ENCODE measurements at regions of chr3 and their contacts with region 1.

Region 1: DNA sequence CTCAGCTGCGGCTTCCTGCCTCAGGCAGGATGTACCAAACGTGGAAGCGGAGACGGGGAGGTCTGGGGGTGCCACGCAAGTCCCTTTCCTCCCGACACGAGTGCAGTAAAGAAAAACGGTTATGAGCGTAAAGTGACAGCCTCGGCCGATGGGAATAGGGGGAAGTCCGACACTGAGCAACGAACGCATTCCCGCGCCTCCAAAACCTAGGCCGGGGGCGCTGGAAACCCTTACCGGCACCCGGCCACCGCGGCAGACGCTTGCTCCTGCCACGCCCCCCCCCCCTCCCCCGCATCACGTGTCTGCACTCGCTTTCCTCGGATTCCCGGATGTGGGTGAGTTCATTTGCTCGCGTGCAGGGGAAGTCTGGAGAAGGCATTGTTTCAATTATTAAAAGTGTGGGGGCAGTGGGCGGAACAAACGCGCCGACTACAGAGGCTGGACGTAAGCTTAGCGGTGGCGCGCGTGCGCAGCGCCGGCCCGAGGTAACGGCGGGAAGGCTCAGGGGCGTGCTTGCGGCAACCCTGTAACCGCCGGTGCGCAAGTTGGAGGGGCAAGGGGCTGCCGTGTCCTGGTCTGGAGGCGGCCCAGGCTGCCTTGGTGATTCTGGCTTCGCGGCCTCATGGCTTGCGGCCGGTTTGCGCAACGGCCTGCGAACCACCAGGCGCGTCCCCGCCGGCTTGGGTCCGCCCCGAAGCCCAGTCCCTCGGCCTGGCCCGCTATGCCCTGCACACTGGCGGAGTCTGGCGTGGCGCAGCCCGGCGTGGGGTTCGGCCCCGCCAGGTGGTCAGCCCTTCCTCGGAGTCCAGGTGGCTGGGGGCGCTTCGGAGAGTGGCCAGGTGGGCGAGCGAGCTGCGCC is at the starts of genes ANAPC13 and CEP63:
- DNase-seq: peak; percentile 84
- ATAC-seq: peak; percentile 82
- H3K4me3 Mint-ChIP-seq: peak within 1 kb of the TSS; percentile 99
- H3K27ac Mint-ChIP-seq: peak within 1 kb of the TSS; percentile 98
- H3K4me1 Mint-ChIP-seq: peaks cover 51% of the 10 kb centered on the region
- H3K27me3 Mint-ChIP-seq: no peaks in the 10 kb centered on the region
- CTCF ChIP-seq: no peak
- total RNA-seq, gene ANAPC13: 27.5 and 31.3 TPM in 2 replicates
- total RNA-seq, gene CEP63: 21.3 and 24.6 TPM in 2 replicates

Region 2: DNA sequence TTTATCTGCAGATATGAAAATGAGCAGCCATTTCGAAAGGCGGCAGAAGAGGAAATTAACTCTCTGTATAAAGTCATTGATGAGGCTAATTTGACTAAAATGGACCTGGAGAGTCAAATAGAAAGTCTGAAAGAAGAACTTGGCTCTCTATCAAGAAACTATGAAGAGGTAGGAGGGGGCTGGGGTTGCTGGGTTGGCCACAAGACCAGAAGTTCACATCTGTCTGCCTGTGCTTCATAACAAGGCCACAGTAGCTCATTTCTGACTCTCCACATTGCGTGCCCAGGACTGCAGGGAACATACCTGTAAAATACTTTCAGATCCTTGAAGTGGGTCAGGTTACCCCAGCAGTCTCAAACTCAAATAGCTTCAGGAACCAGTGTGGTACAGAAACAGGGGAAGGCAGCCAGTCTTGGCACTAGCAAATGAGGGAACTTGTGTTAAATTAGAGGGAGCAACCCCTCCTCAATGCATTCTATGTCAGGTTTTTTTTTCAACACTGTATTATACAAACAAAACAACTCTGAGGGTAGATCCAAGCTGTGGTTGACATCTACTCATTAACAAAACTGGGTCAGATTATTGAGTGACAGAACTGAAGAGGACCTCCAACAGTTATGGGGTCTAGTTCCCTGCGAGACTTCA is 1037.3 kb before region 1 on chr3:
- CTCF ChIA-PET with region 1: no interaction called
- POLR2A ChIA-PET with region 1: no interaction called
- intact Hi-C with region 1: loop called (anchors 10 kb)
- DNase-seq: peak; percentile 40
- ATAC-seq: peak; percentile 88
- H3K4me3 Mint-ChIP-seq: peak overlapping the region; percentile 80
- H3K27ac Mint-ChIP-seq: peak overlapping the region; percentile 95
- H3K4me1 Mint-ChIP-seq: peaks cover 55% of the 10 kb centered on the region
- H3K27me3 Mint-ChIP-seq: peaks cover 6% of the 10 kb centered on the region
- CTCF ChIP-seq: no peak

Region 3: DNA sequence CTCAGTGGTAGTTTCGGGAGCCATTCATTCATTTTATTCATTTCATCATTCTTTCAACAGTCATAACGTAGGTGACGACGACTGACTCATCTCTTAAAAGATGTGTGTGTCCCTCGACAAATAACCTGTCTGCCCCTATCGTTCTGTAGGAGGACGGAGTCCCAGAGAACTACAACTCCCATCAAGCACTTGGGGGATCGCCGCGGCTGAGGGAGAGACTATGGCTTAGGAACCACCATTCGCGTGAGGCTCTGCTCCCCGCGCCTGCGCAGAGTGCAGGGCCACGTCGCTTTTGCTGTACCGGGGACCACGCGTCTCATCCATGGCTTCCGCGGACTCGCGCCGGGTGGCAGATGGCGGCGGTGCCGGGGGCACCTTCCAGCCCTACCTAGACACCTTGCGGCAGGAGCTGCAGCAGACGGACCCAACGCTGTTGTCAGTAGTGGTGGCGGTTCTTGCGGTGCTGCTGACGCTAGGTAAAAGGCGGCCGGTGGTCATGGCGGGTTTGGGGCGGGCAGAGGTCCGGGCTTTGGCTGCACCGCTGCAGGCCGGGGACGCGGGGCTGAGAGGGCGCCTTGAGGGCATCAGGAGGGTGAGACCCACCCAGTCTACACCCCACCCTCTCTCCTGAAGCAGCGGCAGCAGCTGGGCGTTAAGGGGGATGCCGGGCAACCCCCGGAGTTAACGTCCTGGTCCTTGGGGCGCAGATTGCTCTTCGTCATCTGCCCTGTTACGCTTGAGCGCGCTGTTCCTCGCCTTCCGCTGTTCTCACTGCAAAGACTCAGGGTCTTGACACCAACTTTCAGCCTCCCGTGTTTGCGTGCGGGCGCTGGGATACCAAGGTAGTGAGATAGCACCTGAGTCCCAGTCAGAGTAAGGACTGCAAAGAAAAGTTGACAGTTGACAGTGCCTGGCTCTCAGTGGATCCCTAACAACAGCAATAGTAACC is 680.1 kb before region 1 on chr3 and contains the start of gene SRPRB:
- CTCF ChIA-PET with region 1: no interaction called
- POLR2A ChIA-PET with region 1: no interaction called
- intact Hi-C with region 1: loop called (anchors 1 kb)
- DNase-seq: peak; percentile 89
- ATAC-seq: peak; percentile 98
- H3K4me3 Mint-ChIP-seq: peak within 1 kb of the TSS; percentile 96
- H3K27ac Mint-ChIP-seq: peak within 1 kb of the TSS; percentile 95
- H3K4me1 Mint-ChIP-seq: peaks cover 21% of the 10 kb centered on the region
- H3K27me3 Mint-ChIP-seq: peaks cover 3% of the 10 kb centered on the region
- CTCF ChIP-seq: no peak
- total RNA-seq, gene SRPRB: 36.5 and 38.5 TPM in 2 replicates

Region 4: GRCh38 chr3:134212906-134213665 is 272.9 kb before region 1 on chr3:
- CTCF ChIA-PET with region 1: interaction called, 11 read pairs
- POLR2A ChIA-PET with region 1: interaction called, 5 read pairs
- intact Hi-C with region 1: no loop called
- DNase-seq: peak; percentile 73
- ATAC-seq: peak; percentile 82
- H3K4me3 Mint-ChIP-seq: no peak overlapping the region
- H3K27ac Mint-ChIP-seq: no peak overlapping the region
- H3K4me1 Mint-ChIP-seq: peaks cover 18% of the 10 kb centered on the region
- H3K27me3 Mint-ChIP-seq: no peaks in the 10 kb centered on the region
- CTCF ChIP-seq: peak; percentile 47

Region 5: DNA sequence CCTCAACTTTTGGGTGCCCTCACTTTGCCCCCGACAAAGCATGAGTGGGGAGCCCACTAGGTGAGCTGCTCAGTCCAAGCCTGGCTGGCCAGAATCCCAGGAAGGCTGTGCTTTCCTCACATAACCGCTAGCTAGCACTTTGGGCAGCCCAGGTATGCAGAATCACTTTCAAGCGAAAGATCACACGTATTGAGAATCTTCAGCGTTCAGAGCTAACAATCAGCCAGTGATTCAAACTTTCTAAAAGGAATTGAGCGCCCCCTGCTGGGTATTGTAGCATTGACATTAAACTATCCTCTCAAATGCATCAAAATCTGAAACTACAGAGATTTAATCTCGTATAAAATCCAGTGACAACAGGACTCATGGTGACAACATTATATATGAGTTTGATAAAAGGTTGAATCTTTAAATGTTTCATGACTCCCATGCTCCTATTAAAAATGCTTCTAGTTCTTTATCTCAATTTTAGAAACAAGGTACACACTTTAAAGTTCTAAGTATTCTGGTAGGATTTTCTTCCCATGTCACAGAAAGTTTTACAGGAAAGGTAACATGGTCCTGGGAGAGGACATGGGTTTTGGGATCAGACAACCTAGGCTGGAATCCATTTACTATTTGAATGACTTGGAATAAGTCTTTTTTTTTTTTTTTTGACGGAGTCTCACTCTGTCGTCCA is 11.9 kb before region 1 on chr3:
- CTCF ChIA-PET with region 1: interaction called, 25 read pairs
- POLR2A ChIA-PET with region 1: interaction called, 6 read pairs
- intact Hi-C with region 1: no loop called
- DNase-seq: peak; percentile 32
- ATAC-seq: peak; percentile 54
- H3K4me3 Mint-ChIP-seq: no peak overlapping the region
- H3K27ac Mint-ChIP-seq: no peak overlapping the region
- H3K4me1 Mint-ChIP-seq: peaks cover 2% of the 10 kb centered on the region
- H3K27me3 Mint-ChIP-seq: no peaks in the 10 kb centered on the region
- CTCF ChIP-seq: peak; percentile 39

Region 6: GRCh38 chr3:136196401-136197158 is 1710.6 kb after region 1 on chr3:
- CTCF ChIA-PET with region 1: no interaction called
- POLR2A ChIA-PET with region 1: interaction called, 4 read pairs
- intact Hi-C with region 1: loop called (anchors 1 kb)
- DNase-seq: peak; percentile 95
- ATAC-seq: peak; percentile 75
- H3K4me3 Mint-ChIP-seq: peak overlapping the region; percentile 99
- H3K27ac Mint-ChIP-seq: peak overlapping the region; percentile 94
- H3K4me1 Mint-ChIP-seq: peaks cover 47% of the 10 kb centered on the region
- H3K27me3 Mint-ChIP-seq: no peaks in the 10 kb centered on the region
- CTCF ChIP-seq: no peak

Measured in activated B cell treated with CpG ODN at 0.5 μM for 24 hours (primary cell).